ENCODE measurements at regions of chr6 and their contacts with region 1.

Region 1: DNA sequence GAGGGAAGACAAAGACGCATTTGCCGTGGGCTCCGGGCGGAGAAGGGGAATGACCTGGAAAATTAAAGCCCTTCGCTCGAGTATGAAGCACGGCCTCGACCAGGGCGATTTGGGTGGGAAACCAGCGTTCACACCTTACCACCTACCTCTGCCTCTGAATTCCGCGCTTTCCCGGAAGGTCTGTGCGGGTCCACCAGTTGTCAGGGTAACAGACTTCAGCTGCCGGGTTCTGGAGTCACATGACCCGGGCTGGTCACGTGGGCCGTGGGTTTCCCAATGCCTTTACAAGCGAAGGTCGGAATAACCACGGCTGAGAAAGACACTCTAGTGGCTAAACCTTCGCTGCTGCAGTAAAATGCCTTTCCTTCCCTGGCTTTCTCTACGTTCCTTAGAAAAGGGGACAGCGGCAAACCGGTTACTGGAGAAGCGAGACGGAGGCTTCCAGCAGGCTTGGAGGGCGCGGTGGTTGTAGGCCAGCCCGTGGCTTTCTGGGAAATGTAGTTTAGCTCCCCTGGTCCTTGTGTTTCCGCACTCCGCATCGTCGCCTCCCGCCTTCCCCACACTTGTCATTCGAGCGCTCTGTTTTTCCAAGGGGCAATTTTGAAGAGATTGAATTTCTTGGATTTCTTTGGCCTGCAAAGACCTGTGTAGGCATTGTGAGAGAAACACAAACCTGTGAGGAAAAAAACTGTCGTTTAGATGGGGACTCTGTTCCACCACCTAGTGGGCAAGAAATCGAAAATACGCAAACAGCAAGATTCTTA is at the start of gene CEP162:
- DNase-seq: peak; percentile 96
- H3K4me3 ChIP-seq: peak within 1 kb of the TSS; percentile 76 to 85 (median 78)
- H3K27ac ChIP-seq: peak within 1 kb of the TSS; percentile 77 to 92 (median 86)
- H3K4me1 ChIP-seq: peaks cover 0 to 17% (median 7%) of the 10 kb centered on the region in 4 donors
- H3K27me3 ChIP-seq: no peaks in the 10 kb centered on the region
- CTCF ChIP-seq: peak; percentile 66 to 84 (median 75)
- EP300 ChIP-seq: no peak
- POLR2A ChIP-seq: no peak
- total RNA-seq, gene CEP162: 12.4 to 18.6 (median 17.1) TPM

Region 2: GRCh38 chr6:83859410-83860358 is 367.9 kb before region 1 on chr6 and contains the start of gene CYB5R4:
- intact Hi-C with region 1: loop called (anchors 5 kb)
- DNase-seq: peak; percentile 97
- H3K4me3 ChIP-seq: peak within 1 kb of the TSS; percentile 76 to 89 (median 82)
- H3K27ac ChIP-seq: peak within 1 kb of the TSS; percentile 86 to 90 (median 88)
- H3K4me1 ChIP-seq: peaks cover 0 to 35% (median 25%) of the 10 kb centered on the region in 4 donors
- H3K27me3 ChIP-seq: no peaks in the 10 kb centered on the region
- CTCF ChIP-seq: peak in 3 of 4 experiments; percentile 24 to 43 (median 24)
- EP300 ChIP-seq: no peak
- POLR2A ChIP-seq: peak; percentile 84 to 92
- total RNA-seq, gene CYB5R4: 9.7 to 14.3 (median 10.9) TPM

Region 3: DNA sequence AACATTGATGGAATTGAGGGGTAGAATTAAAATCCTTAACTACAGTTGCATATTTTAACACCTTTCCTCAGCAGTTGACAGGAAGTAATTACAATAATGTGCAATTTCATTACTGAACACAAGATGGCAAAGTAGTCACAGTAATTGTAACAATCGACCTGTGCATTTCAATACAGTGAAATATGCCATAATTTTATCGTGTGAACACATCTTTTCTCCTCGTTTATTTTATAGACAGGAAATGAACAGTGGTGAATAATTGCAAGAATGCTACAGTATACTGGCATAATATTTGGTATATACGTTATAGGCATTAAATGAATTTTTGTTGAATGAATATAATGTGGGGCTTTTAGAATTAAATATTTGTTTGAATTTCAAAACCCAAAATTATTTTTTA is 343.1 kb before region 1 on chr6:
- intact Hi-C with region 1: loop called (anchors 5 kb)
- DNase-seq: no peak
- H3K4me3 ChIP-seq: no peak overlapping the region
- H3K27ac ChIP-seq: no peak overlapping the region
- H3K4me1 ChIP-seq: peaks cover 0 to 4% (median 2%) of the 10 kb centered on the region in 4 donors
- H3K27me3 ChIP-seq: no peaks in the 10 kb centered on the region
- CTCF ChIP-seq: peak in 3 of 4 experiments; percentile 58 to 61 (median 59)
- EP300 ChIP-seq: no peak
- POLR2A ChIP-seq: no peak

Region 4: DNA sequence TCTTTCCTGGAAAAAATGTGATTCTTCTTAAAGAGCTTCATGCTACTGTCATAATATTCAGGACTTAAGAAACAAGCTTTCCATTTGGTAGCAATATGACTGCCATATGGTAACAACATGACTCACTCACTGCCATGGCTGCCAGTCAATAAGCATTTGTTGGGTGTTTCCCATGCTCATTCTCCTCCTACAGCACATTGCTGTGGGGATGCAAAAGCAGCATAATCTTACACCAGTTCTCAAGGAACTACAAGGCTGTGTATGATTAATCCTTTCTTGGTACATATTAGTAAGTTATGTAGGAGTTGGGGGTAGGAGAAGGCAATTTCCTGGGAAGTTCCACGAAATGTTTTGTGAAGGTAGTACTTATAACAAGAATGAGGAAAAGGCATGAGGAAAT is 76.9 kb before region 1 on chr6:
- intact Hi-C with region 1: no loop called
- DNase-seq: no peak
- H3K4me3 ChIP-seq: no peak overlapping the region
- H3K27ac ChIP-seq: no peak overlapping the region
- H3K4me1 ChIP-seq: no peaks in the 10 kb centered on the region
- H3K27me3 ChIP-seq: no peaks in the 10 kb centered on the region
- CTCF ChIP-seq: no peak
- EP300 ChIP-seq: no peak
- POLR2A ChIP-seq: no peak

Measured in sigmoid colon (tissue), 7 donors.